Activated B cell treated with CpG ODN at 0.5 μM for 24 hours (primary cell): ENCODE measurements at regions of chr2 and their contacts with region 1.

Region 1: DNA sequence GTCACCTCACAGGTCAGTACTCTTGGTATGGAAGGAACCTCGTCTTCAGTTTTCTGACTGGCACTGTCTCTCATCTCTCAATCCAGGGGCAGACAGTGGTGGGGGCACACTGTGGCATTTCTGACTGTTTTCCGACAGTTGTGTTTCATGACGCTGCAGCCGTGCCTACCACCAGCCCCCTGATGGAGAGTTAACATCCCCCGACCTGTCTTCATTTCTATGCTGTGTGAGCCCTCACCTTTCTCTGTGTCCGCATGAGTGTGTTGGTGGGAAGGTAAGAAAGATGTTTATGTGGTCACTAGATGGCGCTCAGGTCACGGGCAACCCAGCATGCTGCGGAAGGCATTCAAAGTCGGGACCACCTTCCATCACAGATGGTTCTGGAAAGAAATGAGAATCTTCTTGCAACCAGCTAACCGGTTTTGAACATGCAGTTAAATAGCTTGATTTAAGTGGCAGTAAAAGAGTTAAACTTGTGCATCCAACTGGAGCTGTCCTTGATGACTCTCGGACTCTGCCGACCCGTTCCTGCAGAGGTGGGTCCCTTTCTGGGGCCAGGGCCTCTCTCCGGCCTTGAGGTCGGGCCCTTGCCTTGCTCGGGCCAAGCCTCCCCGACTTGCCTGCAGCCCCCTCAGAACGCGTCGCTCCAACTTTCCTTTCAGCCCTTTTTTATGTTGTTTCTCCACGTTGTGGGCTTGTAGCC is 92.4 kb downstream of the DYSF start:
- DNase-seq: no peak
- ATAC-seq: peak; percentile 52
- H3K4me3 Mint-ChIP-seq: peak overlapping the region; percentile 60
- H3K27ac Mint-ChIP-seq: no peak overlapping the region
- H3K4me1 Mint-ChIP-seq: peaks cover 7% of the 10 kb centered on the region
- H3K27me3 Mint-ChIP-seq: peaks cover 29% of the 10 kb centered on the region
- CTCF ChIP-seq: no peak

Region 2: DNA sequence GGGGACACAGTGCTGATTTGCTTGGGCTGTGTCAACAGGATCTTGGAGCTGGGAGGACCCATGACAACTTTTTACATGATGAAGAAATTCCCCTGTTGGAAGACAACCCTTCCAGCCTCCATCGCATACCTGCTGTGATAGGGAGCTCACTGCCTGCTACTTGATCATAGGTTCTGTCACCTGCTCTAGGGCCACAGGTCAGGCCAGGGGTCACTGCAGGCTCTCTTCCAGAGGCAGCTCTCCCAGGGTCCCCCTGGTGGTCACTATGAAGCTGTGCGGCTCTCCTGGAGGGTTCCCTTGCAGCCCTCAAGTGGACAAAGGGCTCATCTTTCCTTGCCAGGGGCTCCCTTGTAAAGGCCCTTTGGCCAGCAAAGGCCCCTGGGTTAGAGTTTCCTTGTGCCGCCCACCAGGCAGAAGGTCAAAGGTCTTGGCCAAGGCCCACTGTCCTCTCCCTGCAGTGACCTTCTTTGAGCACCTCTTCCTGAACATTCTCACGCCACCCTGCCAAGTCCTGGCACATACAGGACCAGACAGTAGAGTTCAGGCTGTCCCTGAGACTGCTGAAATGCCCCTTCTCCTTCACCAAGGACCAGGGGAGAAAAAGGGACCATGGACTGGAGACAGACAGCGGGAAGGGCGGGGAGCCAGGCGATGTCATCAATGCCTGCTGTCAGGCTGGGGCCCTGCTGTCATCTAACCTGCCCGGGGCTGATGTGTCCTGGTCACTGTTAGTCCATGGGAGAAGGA is 252.7 kb after region 1 on chr2:
- CTCF ChIA-PET with region 1: interaction called, 3 read pairs
- POLR2A ChIA-PET with region 1: no interaction called
- intact Hi-C with region 1: loop called (anchors 5 kb)
- DNase-seq: no peak
- ATAC-seq: no peak
- H3K4me3 Mint-ChIP-seq: no peak overlapping the region
- H3K27ac Mint-ChIP-seq: no peak overlapping the region
- H3K4me1 Mint-ChIP-seq: no peaks in the 10 kb centered on the region
- H3K27me3 Mint-ChIP-seq: peaks cover 6% of the 10 kb centered on the region
- CTCF ChIP-seq: no peak

Region 3: DNA sequence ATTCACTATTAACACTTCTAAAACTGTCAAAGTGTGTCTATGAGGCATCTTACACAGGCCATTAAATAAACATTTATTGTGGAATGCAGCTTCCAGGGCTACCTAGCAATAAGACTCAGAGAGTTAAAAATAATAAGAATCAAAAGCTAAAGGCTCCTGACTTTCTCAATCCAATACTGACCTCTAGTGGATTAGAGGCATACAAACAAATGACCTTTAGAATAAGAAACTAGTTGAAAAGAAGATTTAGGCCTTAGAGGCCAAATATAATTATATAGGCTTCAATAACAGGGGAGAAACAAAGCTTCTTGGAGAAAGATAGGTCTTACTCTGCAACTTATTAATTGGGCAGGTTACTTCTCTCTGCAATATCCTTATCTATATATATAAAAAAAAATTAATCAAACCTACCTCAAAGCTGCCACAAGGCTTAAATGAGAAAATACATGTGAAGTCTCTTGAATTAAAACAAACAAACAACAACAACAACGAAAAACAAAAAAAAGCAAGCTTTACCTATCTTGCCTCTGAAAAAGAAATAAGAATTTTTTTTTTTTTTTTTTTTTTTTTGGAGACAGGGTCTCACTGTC is 1034.0 kb after region 1 on chr2:
- CTCF ChIA-PET with region 1: interaction called, 5 read pairs
- POLR2A ChIA-PET with region 1: no interaction called
- intact Hi-C with region 1: loop called (anchors 1 kb)
- DNase-seq: no peak
- ATAC-seq: no peak
- H3K4me3 Mint-ChIP-seq: no peak overlapping the region
- H3K27ac Mint-ChIP-seq: no peak overlapping the region
- H3K4me1 Mint-ChIP-seq: no peaks in the 10 kb centered on the region
- H3K27me3 Mint-ChIP-seq: no peaks in the 10 kb centered on the region
- CTCF ChIP-seq: no peak

Region 4: GRCh38 chr2:72745679-72746368 is 1200.1 kb after region 1 on chr2:
- CTCF ChIA-PET with region 1: no interaction called
- POLR2A ChIA-PET with region 1: no interaction called
- intact Hi-C with region 1: loop called (anchors 1 kb)
- DNase-seq: no peak
- ATAC-seq: no peak
- H3K4me3 Mint-ChIP-seq: no peak overlapping the region
- H3K27ac Mint-ChIP-seq: no peak overlapping the region
- H3K4me1 Mint-ChIP-seq: no peaks in the 10 kb centered on the region
- H3K27me3 Mint-ChIP-seq: no peaks in the 10 kb centered on the region
- CTCF ChIP-seq: no peak

Region 5: DNA sequence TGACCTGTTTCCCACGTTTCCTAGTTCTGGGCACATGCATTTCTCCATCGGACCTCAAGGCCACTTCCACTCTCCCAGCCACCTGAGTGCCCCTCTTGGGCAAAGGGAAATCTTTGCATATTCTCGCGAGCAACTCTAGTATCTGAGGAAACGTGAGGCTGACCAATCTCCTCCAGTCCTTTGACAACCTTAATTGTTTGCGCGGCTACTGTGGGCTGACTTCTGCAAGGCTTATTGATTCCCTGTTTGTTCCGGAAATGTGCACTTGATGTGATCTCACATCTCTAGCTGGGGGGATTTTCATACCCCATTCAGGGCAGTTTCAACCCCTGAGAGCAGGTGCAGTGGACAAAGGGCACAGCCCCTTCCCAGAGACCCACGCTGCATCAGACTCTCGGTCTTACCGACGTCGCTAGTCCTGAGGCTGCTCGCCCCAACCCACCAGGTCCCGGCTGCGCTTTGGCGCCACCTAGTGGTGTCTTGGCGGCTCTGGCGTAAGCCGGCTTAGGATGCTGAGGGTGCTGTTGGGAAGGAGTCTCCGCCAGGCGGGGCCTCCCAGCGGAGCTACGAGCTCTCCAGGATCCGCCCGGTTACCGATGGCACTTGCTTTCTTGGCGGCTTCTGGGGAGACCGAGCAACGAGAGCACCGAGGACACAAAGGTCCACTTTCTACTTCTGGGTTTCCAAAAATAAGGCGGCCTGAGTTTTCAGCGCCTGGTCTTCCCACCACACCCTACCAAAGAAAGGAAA is 1316.7 kb after region 1 on chr2:
- CTCF ChIA-PET with region 1: no interaction called
- POLR2A ChIA-PET with region 1: no interaction called
- intact Hi-C with region 1: loop called (anchors 5 kb)
- DNase-seq: peak; percentile 77
- ATAC-seq: peak; percentile 89
- H3K4me3 Mint-ChIP-seq: peak overlapping the region; percentile 42
- H3K27ac Mint-ChIP-seq: no peak overlapping the region
- H3K4me1 Mint-ChIP-seq: peaks cover 16% of the 10 kb centered on the region
- H3K27me3 Mint-ChIP-seq: peaks cover 39% of the 10 kb centered on the region
- CTCF ChIP-seq: peak; percentile 87